Right ventricle myocardium superior (tissue), 1 donor: ENCODE measurements at regions of chrX and their contacts with region 1.

Region 1: DNA sequence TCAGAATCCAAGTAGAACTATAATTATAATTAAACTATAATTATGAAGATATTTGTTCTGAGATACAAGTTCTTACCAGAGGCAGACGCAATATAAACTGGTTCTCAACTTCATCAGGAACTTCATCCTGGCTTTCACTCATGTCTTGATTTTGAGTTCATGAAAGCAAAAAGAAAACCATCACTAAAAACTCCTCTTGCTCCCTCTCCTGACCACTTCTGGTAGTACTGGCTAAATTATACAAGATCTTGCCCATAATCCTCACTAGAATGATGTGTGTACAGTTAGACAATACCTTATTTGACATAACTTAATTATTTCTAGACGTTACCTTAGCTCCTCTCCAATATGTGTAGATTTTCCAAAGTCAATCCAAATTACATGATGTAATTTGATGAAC is 3.7 kb downstream of the TAF7L start:
- DNase-seq: no peak
- ATAC-seq: no peak

Region 2: GRCh38 chrX:100895365-100896075 is 391.9 kb before region 1 on chrX:
- intact Hi-C with region 1: loop called (anchors 5 kb)
- DNase-seq: no peak
- ATAC-seq: peak; percentile 43